ENCODE measurements at regions of chrX and their contacts with region 1.

Region 1: GRCh38 chrX:123846598-123847455 is 13.0 kb upstream of the XIAP start:
- DNase-seq: no peak

Region 2: GRCh38 chrX:122962787-122963186 is 884.0 kb before region 1 on chrX:
- intact Hi-C with region 1: loop called in 1 of 2 experiments (anchors 5 kb)
- DNase-seq: no peak